Posterior vena cava (tissue), 2 donors: ENCODE measurements at regions of chr9 and their contacts with region 1.

Region 1: DNA sequence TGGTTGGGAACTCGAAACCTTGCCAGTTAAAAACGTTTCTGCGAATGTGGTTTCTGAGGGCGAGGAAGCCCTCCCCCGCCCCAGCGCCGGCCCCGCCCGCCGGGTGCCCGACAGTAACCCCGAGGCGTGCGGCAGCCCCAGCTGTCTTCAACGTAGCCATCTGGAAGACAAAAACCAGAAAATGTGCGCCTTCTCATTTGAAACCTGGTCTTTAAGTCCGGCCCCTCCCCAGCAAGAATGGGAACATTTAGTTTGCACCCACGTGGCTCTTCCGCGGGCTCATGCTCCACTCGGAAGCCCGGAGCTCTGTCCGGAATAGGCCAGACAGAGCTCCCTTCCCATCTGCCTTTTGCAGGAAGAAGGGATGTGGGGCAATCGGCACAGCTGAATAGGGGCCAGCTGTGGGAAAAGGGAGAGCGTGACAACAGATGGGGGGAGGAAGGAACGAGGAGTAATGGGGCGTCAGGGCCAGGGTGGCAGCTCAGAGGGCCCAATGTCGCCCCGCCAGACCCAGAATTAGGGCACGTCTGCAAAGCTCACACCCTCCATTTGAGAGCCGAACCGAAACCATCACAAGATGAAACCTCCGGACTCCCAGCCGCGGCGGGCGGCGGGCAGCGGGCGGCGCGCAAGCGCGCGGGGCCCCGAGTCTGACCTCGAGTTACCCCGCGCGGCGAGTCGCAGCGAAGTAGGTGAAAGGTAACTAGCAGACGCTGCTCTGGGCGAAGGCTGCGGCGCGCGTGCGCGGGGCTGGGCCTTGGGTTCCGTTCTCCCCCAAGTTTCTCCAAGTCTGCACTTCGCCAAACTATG is 63.4 kb upstream of the ABCA1 start:
- DNase-seq: peak; percentile 97

Region 2: DNA sequence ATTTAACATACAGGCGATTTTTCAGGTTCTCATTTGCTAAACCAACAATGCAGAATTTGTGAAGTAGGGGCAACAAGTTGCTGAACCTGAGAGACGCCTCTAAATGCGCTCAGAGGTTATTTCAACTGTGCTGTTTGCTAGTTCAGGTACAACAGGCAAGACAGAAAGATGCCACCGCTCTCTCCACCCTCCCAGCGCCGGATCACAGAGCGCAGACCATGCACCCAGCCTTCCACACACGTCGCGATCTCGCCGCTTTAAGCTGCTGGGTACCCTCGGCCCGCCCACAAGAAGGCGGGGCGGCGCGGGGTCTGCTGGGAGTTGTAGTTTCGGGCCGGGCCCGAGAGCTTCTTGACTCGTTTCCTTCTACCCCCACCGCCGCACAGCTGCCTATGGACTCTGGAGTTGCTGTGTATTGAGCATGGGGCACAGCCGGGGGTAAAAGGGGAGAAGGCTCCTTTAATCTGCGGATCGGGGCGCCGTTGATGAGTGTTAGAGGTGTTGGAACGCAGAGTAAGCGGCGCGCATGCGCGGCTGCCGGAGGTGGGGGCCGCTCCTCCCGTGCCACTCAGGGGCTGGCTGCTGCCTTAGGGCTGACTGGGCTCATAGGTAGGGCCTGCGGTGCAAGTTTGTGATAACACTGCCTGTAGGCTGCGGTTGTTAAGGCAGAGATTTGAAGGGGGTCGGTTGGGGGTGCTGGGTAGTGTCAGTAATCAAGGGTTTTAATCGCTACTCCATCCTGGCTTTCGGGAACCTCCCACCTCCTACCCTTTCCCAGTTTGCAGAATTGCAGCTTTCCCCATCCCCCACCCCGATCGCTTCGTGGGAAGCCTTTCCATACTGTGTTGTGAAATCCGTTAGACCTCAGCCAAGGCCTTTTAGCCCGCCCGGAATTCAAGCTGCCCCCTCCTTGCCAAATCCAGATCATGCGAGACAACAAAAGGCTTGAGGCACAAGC is 23.0 kb before region 1 on chr9:
- intact Hi-C with region 1: no loop called
- DNase-seq: peak; percentile 96

Region 3: DNA sequence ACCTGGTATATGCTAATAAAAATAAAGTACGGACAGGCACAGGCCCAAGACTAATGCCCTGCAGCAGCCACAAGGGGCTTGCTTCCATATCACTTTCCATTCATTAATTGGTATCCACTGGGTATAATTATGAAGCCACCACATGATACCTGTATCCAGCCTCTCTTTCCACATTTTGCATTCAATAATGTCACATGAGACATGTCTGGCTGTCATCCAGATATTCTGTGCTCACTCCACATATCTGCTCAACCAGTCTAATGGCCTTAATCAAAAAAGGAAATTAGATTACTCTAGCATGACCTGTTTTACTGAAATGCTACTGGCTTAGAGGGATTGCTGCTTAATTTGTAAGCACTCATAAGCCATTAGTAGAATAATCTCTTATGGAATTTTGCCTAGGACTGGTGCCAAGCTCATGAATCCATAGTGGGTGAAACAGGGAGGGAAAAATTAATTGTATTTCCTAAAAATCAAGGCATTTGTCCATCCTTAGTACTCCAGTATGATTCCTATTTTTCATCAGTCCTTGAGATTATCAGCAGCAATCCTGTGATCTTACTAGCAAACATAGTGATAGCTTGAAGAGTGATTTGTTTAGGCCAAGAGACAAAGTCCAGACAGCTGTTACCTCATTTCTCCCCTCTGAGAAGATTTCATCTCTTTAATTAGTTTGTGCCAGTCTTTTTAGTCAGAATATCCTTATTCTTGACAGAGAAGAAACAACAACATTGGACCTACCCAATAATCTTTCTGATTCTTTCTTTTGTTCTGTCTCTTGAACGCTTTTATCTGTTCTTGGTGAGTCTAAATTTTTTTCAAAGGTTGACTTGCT is 55.8 kb after region 1 on chr9:
- intact Hi-C with region 1: loop called in 1 of 2 experiments (anchors 10 kb)
- DNase-seq: no peak

Region 4: GRCh38 chr9:105064315-105065097 is 73.2 kb after region 1 on chr9:
- intact Hi-C with region 1: loop called in 1 of 2 experiments (anchors 5 kb)
- DNase-seq: peak; percentile 96

Region 5: DNA sequence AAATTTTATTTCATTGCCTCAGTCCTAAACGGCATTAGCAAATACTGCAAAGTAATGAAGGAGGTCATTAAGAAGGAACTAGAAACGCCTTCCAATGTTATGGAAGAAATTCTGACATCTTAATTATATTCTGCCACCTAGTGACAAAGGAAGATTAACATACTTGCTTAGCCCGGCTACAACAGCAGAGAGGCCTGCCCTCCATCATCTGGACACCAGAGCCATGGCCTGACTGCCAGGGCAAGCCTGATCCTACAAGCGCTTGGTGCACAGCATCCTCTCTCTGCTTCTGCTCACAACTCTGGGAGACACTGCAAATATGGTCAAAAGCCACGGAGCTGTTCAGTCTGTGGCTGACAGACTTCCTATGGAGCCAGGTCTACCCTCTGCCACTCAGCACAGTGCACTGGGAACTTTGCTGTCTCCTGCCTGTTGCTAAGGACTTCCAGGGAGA is 165.8 kb after region 1 on chr9:
- intact Hi-C with region 1: loop called in 1 of 2 experiments (anchors 10 kb)
- DNase-seq: peak; percentile 84

Region 6: GRCh38 chr9:105205787-105206495 is 214.6 kb after region 1 on chr9:
- intact Hi-C with region 1: no loop called
- DNase-seq: no peak

Region 7: GRCh38 chr9:105414947-105415661 is 423.8 kb after region 1 on chr9:
- intact Hi-C with region 1: loop called in 1 of 2 experiments (anchors 2 kb)
- DNase-seq: no peak